ENCODE measurements at regions of chr3 and their contacts with region 1.

Region 1: GRCh38 chr3:120417272-120417911 is 33.4 kb downstream of the FSTL1 start:
- DNase-seq: peak; percentile 94
- ATAC-seq: peak; percentile 90
- H3K4me3 Mint-ChIP-seq: peak overlapping the region; percentile 46
- H3K27ac Mint-ChIP-seq: peak overlapping the region; percentile 87
- H3K4me1 Mint-ChIP-seq: peaks cover 46% of the 10 kb centered on the region
- H3K27me3 Mint-ChIP-seq: no peaks in the 10 kb centered on the region
- CTCF ChIP-seq: peak; percentile 77

Region 2: DNA sequence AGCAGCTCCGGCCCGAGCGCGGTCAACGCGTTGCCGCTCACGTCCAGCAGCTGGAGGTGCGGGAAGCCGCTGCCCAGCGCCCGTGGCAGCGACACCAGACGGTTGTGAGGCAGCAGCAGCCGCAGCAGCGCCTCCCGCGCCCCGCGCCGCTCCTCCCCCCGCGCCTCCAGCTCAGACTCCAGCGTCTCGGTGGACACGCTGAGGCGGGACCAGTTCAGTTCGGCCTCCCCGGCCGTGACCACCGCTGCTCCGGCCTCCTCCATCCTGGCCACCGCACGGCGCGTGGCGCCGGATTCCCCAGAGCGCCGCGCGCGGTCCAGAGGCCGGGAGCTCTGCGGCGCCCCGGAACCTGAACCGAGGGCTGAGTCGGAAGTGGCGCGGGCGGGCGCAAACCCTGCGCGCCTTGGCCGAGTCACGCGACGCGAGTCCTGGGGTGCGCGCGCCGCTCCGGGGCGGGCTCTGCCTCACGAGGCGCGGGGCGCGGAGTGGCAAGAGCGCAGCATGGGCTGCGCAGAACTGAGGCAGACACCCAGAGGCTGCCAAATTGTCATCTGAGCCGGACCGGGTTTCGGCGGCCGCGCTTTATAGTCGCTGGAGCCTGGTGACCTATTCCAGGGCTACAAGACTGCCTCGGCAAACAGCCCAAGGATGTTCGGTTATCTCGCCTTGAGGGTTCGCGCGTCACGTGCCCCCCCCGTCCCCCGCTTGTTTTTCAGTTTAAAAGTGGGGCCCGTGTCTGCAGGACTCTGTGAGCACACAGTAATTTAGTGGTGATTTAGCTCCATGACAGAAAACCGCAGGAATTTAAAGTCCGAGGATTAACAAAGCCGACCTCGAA is 68.2 kb before region 1 on chr3 and contains the start of gene LRRC58:
- CTCF ChIA-PET with region 1: interaction called, 22 read pairs
- POLR2A ChIA-PET with region 1: interaction called, 5 read pairs
- DNase-seq: peak; percentile 66
- ATAC-seq: peak; percentile 73
- H3K4me3 Mint-ChIP-seq: peak within 1 kb of the TSS; percentile 72
- H3K27ac Mint-ChIP-seq: peak within 1 kb of the TSS; percentile 58
- H3K4me1 Mint-ChIP-seq: peaks cover 25% of the 10 kb centered on the region
- H3K27me3 Mint-ChIP-seq: peaks cover 14% of the 10 kb centered on the region
- CTCF ChIP-seq: no peak
- total RNA-seq, gene LRRC58: 15.1 to 15.8 TPM (median 15.8 TPM) in 3 replicates

Region 3: GRCh38 chr3:120442975-120443517 is 25.7 kb after region 1 on chr3:
- CTCF ChIA-PET with region 1: interaction called, 39 read pairs
- POLR2A ChIA-PET with region 1: interaction called, 3 read pairs
- DNase-seq: no peak
- ATAC-seq: peak; percentile 78
- H3K4me3 Mint-ChIP-seq: no peak overlapping the region
- H3K27ac Mint-ChIP-seq: peak overlapping the region; percentile 14; the same call in 1 of the 2 replicates
- H3K4me1 Mint-ChIP-seq: peaks cover 40% of the 10 kb centered on the region
- H3K27me3 Mint-ChIP-seq: no peaks in the 10 kb centered on the region
- CTCF ChIP-seq: no peak

Region 4: DNA sequence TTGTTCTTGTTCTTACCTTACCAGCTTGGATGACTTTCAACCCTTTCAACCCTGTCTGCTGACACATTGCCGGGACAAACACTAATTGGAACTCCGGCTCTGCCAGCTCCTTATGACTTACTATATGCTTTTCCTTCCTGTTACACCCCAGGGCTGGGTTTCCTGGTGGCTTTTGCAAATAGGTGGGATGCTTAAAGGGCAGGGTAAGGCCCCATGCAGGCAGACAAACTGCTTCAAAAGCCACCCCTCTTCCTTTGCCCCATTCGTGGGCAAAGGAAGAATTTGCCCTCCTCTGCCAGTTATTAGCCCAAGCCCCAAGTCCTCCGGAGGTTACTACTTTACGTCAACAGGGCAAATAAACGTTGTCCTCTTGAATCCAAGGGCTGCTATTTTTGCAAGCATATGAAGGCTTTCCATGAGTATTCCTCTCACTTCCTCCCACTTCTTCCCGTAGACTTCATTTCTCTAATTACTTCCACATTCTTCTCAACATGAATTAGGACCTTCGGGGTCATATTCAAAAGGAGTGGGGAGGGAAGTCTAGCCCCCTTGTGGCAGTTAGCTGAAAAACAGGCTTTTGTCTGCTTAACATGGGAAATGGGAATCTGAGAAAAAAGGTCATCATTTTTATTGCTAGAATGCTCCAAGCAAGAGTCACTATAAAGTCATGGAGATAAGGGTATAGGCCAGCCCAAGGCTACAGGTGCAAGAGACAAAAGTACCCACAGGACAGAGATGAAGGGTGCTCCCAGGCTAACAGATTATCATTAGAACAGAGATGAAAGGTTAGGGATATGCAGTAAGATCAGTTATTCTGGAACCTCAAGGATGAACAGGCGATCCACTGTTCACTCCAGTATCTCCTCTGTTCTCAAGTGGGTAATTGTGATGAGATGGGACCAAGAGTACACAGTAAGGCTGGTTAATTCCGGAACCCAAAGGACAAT is 89.7 kb after region 1 on chr3:
- CTCF ChIA-PET with region 1: interaction called, 40 read pairs
- POLR2A ChIA-PET with region 1: no interaction called
- DNase-seq: peak; percentile 39
- ATAC-seq: 0 out of 2 replicates have a peak, but pooled peaks have one; percentile 17
- H3K4me3 Mint-ChIP-seq: no peak overlapping the region
- H3K27ac Mint-ChIP-seq: no peak overlapping the region
- H3K4me1 Mint-ChIP-seq: peaks cover 26% of the 10 kb centered on the region
- H3K27me3 Mint-ChIP-seq: no peaks in the 10 kb centered on the region
- CTCF ChIP-seq: peak; percentile 52

Region 5: DNA sequence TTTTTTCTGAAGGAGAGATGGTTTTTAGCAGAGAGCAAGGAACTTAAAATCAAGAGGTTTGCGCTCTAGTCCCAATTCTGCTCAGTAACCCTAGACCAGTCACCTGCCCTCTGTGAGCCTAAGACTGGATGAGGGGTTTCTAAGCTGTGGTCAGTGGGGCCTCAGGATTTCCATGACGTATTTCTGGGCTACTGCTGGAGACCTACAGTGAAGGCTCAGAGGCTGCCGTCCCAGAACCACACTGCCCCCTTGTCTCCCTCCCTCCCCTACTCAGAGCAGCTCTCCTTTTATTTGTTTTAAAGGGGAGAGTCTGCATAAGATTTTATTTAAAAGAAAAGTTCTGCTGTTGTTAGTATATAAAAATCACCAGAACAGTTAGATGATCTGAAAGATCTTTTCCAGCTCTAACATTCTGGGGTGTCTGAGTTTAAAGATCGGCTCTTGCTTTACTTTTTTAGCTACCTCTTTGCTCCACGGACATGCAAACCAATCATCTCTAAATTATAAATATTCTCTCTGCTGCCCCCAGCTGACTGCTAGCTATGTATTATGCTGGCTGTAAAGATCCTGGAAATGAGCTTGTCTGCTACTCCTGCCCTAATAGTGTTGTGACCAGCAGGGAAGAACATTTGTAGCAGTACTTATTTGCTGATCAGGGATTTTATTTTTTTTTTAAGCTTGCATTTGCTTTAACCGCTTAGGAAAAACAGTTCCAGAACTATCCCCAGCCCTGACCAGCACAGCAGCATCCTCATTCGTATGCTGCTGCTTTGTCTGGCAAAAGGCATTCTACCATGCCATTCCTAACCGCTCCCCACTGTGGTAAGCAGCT is 150.2 kb after region 1 on chr3:
- CTCF ChIA-PET with region 1: interaction called, 25 read pairs
- POLR2A ChIA-PET with region 1: no interaction called
- DNase-seq: peak; percentile 24
- ATAC-seq: peak; percentile 85
- H3K4me3 Mint-ChIP-seq: peak overlapping the region; percentile 47
- H3K27ac Mint-ChIP-seq: peak overlapping the region; percentile 92
- H3K4me1 Mint-ChIP-seq: peaks cover 40% of the 10 kb centered on the region
- H3K27me3 Mint-ChIP-seq: peaks cover 3% of the 10 kb centered on the region; the same call in 1 of the 2 replicates
- CTCF ChIP-seq: no peak